Naive thymus-derived CD4-positive, alpha-beta T cell (primary cell): ENCODE measurements at regions of chr2 and their contacts with region 1.

Region 1: DNA sequence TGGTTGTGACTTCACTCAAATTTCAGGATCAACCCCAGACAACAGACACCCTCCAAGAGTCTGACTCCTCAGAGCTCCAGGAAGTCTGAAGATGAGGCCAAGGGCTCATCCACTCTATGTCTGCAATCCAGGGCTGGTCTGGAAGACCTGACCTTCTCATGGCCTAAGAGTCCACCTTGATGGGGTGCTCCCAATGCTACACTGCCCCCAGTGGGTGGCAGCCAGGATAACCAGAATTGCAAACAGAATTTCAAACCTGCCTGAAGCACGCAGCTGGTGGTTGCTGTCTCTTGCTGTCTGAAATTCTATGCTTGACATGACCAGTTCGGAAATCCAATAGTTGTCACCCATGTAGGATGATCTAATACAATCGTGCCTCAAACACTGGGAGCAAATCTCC is 96.0 kb downstream of the UXS1 start:
- DNase-seq: no peak
- ATAC-seq: no peak
- H3K4me3 ChIP-seq: no peak overlapping the region
- H3K4me3 Mint-ChIP-seq: peak overlapping the region in 4 of 10 donors; percentile 1 to 36 (median 6)
- H3K27ac ChIP-seq: peak overlapping the region; percentile 80
- H3K27ac Mint-ChIP-seq: peak overlapping the region; percentile 25 to 97 (median 94)
- H3K4me1 ChIP-seq: peaks cover 41 to 47% of the 10 kb centered on the region in 2 donors
- H3K4me1 Mint-ChIP-seq: peaks cover 27 to 67% (median 55%) of the 10 kb centered on the region in 7 donors
- H3K27me3 ChIP-seq: no peaks in the 10 kb centered on the region
- H3K27me3 Mint-ChIP-seq: no peaks in the 10 kb centered on the region

Region 2: GRCh38 chr2:105337124-105338019 is 760.7 kb before region 1 on chr2 and contains the start of gene C2orf49:
- CTCF ChIA-PET with region 1: no interaction called
- POLR2A ChIA-PET with region 1: no interaction called
- intact Hi-C with region 1: loop called in 1 of 2 experiments (anchors 2 kb)
- DNase-seq: peak; percentile 81 to 94 (median 92)
- ATAC-seq: peak; percentile 94
- H3K4me3 ChIP-seq: peak within 1 kb of the TSS; percentile 83
- H3K4me3 Mint-ChIP-seq: peak within 1 kb of the TSS; percentile 89 to 100 (median 98)
- H3K27ac ChIP-seq: peak within 1 kb of the TSS; percentile 99
- H3K27ac Mint-ChIP-seq: peak within 1 kb of the TSS; percentile 99 to 100 (median 100)
- H3K4me1 ChIP-seq: peaks cover 18 to 22% of the 10 kb centered on the region in 2 donors
- H3K4me1 Mint-ChIP-seq: peaks cover 20 to 44% (median 42%) of the 10 kb centered on the region in 7 donors
- H3K27me3 ChIP-seq: no peaks in the 10 kb centered on the region
- H3K27me3 Mint-ChIP-seq: no peaks in the 10 kb centered on the region
- total RNA-seq, gene C2orf49: 17.5 to 30.8 (median 23.4) TPM

Region 3: DNA sequence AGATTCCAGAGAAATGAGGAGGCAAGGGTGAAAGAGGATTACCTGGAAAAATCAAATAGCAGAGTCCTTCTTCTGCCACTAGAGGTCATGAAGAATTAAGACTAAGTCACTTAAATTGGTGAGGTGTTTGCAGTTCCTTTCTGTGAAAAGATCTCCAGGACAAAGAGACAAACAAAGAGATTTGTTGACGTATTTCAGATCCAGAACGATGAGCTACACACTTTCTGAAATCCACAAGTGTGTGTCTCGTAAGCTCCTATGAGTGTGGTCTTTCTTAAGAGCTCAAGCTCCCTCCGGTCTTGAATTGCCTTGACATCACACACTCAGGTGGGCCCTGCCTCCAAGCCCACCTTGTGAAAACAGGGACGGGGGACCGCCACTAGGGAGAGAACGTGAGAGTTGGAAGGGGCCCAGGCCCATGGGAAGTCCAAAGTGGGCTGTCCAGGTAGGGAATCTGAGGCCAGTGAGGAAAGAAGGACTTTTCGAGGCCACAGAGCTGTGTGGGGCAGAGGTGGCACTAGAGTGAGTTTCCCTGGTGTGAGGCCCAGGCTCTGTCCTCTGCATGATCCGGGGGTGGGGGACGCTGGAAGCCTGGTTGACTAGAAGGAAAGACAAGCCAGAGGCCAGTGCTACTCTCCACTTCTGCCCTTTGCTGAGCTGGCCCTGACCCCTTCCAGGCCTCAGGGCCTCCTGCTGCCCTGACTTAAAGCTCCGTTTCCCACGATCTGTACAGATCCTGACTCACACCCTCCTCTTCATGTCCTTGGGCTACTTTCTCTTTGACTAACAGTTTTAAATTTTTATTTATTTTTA is 521.4 kb before region 1 on chr2:
- CTCF ChIA-PET with region 1: interaction called, 20 read pairs
- POLR2A ChIA-PET with region 1: interaction called, 5 read pairs
- intact Hi-C with region 1: loop called (anchors 1 to 2 kb)
- DNase-seq: peak in 7 of 9 donors; percentile 24 to 70 (median 50)
- ATAC-seq: peak; percentile 73
- H3K4me3 ChIP-seq: no peak overlapping the region
- H3K4me3 Mint-ChIP-seq: peak overlapping the region in 5 of 10 donors; percentile 1 to 41 (median 26)
- H3K27ac ChIP-seq: peak overlapping the region; percentile 39
- H3K27ac Mint-ChIP-seq: peak overlapping the region; percentile 74 to 95 (median 89)
- H3K4me1 ChIP-seq: peaks cover 3 to 16% of the 10 kb centered on the region in 2 donors
- H3K4me1 Mint-ChIP-seq: peaks cover 13 to 30% (median 20%) of the 10 kb centered on the region in 7 donors
- H3K27me3 ChIP-seq: no peaks in the 10 kb centered on the region
- H3K27me3 Mint-ChIP-seq: peaks cover 0 to 7% (median 0%) of the 10 kb centered on the region in 5 donors

Region 4: GRCh38 chr2:105782123-105782522 is 316.0 kb before region 1 on chr2:
- CTCF ChIA-PET with region 1: interaction called, 4 read pairs
- POLR2A ChIA-PET with region 1: interaction called, 5 read pairs
- intact Hi-C with region 1: loop called in 1 of 2 experiments (anchors 1 kb)
- DNase-seq: peak in 1 of 9 donors; percentile 44
- ATAC-seq: peak; percentile 42
- H3K4me3 ChIP-seq: peak overlapping the region; percentile 52
- H3K4me3 Mint-ChIP-seq: peak overlapping the region; percentile 19 to 88 (median 78)
- H3K27ac ChIP-seq: peak overlapping the region; percentile 54
- H3K27ac Mint-ChIP-seq: peak overlapping the region; percentile 79 to 98 (median 91)
- H3K4me1 ChIP-seq: peaks cover 97 to 99% of the 10 kb centered on the region in 2 donors
- H3K4me1 Mint-ChIP-seq: peaks cover 70 to 97% (median 93%) of the 10 kb centered on the region in 7 donors
- H3K27me3 ChIP-seq: no peaks in the 10 kb centered on the region
- H3K27me3 Mint-ChIP-seq: no peaks in the 10 kb centered on the region

Region 5: GRCh38 chr2:105929516-105929915 is 168.6 kb before region 1 on chr2:
- CTCF ChIA-PET with region 1: interaction called, 3 read pairs
- POLR2A ChIA-PET with region 1: interaction called, 21 read pairs
- intact Hi-C with region 1: no loop called
- DNase-seq: peak in 8 of 9 donors; percentile 31 to 79 (median 70)
- ATAC-seq: peak; percentile 72
- H3K4me3 ChIP-seq: no peak overlapping the region
- H3K4me3 Mint-ChIP-seq: peak overlapping the region in 9 of 10 donors; percentile 51 to 85 (median 64)
- H3K27ac ChIP-seq: peak overlapping the region; percentile 55
- H3K27ac Mint-ChIP-seq: peak overlapping the region; percentile 63 to 97 (median 90)
- H3K4me1 ChIP-seq: peaks cover 61 to 83% of the 10 kb centered on the region in 2 donors
- H3K4me1 Mint-ChIP-seq: peaks cover 48 to 76% (median 71%) of the 10 kb centered on the region in 7 donors
- H3K27me3 ChIP-seq: no peaks in the 10 kb centered on the region
- H3K27me3 Mint-ChIP-seq: no peaks in the 10 kb centered on the region

Region 6: GRCh38 chr2:106053116-106053515 is 45.0 kb before region 1 on chr2:
- CTCF ChIA-PET with region 1: interaction called, 5 read pairs
- POLR2A ChIA-PET with region 1: interaction called, 4 read pairs
- intact Hi-C with region 1: loop called in 1 of 2 experiments (anchors 1 kb)
- DNase-seq: peak in 5 of 9 donors; percentile 21 to 39 (median 33)
- ATAC-seq: peak; percentile 67
- H3K4me3 ChIP-seq: peak overlapping the region; percentile 28
- H3K4me3 Mint-ChIP-seq: peak overlapping the region in 9 of 10 donors; percentile 10 to 82 (median 74)
- H3K27ac ChIP-seq: no peak overlapping the region
- H3K27ac Mint-ChIP-seq: peak overlapping the region in 7 of 9 donors; percentile 17 to 77 (median 53)
- H3K4me1 ChIP-seq: peaks cover 45 to 64% of the 10 kb centered on the region in 2 donors
- H3K4me1 Mint-ChIP-seq: peaks cover 44 to 83% (median 76%) of the 10 kb centered on the region in 7 donors
- H3K27me3 ChIP-seq: no peaks in the 10 kb centered on the region
- H3K27me3 Mint-ChIP-seq: peaks cover 0 to 5% (median 0%) of the 10 kb centered on the region in 5 donors

Region 7: DNA sequence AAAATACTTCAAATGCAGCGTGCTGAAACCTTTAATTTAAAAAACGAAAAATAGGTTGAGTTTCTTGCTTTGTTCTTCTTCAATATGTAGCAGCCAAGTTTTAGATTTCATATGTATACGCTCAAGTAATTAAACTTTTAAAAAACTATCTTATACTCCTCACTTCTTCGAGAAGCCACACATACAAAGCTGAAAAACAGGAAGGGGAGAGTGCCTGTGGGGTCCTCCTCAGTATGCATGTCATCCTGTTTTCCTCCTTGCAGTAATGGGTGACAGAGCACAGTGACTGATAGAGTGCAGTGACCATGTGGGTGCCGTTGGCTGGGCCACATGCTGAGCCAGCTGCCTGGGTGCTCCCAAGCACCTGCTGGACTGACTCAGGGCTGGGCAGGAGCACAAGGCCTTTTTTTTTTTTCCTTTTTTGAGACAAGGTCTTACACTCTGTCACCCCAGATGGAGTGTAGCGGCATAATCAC is 62.7 kb after region 1 on chr2:
- CTCF ChIA-PET with region 1: interaction called, 5 read pairs
- POLR2A ChIA-PET with region 1: interaction called, 31 read pairs
- intact Hi-C with region 1: loop called in 1 of 2 experiments (anchors 2 kb)
- DNase-seq: peak in 8 of 9 donors; percentile 33 to 70 (median 62)
- ATAC-seq: peak; percentile 75
- H3K4me3 ChIP-seq: peak overlapping the region; percentile 77
- H3K4me3 Mint-ChIP-seq: peak overlapping the region; percentile 87 to 98 (median 95)
- H3K27ac ChIP-seq: peak overlapping the region; percentile 81
- H3K27ac Mint-ChIP-seq: peak overlapping the region; percentile 95 to 99 (median 98)
- H3K4me1 ChIP-seq: peaks cover 43 to 78% of the 10 kb centered on the region in 2 donors
- H3K4me1 Mint-ChIP-seq: peaks cover 47 to 100% (median 97%) of the 10 kb centered on the region in 7 donors
- H3K27me3 ChIP-seq: no peaks in the 10 kb centered on the region
- H3K27me3 Mint-ChIP-seq: no peaks in the 10 kb centered on the region